Activated CD4-positive, alpha-beta memory T cell treated with anti-CD3 and anti-CD28 coated beads for 36 hours (primary cell): ENCODE measurements at regions of chr22 and their contacts with region 1.

Region 1: GRCh38 chr22:40533712-40534378 is 102.7 kb downstream of the MRTFA start:
- DNase-seq: peak; percentile 65
- H3K4me3 Mint-ChIP-seq: peak overlapping the region; percentile 78
- H3K27ac Mint-ChIP-seq: peak overlapping the region; percentile 83
- H3K4me1 Mint-ChIP-seq: peaks cover 64% of the 10 kb centered on the region
- H3K27me3 Mint-ChIP-seq: no peaks in the 10 kb centered on the region

Region 2: GRCh38 chr22:40270748-40271373 is 263.0 kb before region 1 on chr22:
- CTCF ChIA-PET with region 1: no interaction called
- POLR2A ChIA-PET with region 1: no interaction called
- intact Hi-C with region 1: no loop called
- DNase-seq: no peak
- H3K4me3 Mint-ChIP-seq: no peak overlapping the region
- H3K27ac Mint-ChIP-seq: no peak overlapping the region
- H3K4me1 Mint-ChIP-seq: peaks cover 24% of the 10 kb centered on the region
- H3K27me3 Mint-ChIP-seq: no peaks in the 10 kb centered on the region

Region 3: DNA sequence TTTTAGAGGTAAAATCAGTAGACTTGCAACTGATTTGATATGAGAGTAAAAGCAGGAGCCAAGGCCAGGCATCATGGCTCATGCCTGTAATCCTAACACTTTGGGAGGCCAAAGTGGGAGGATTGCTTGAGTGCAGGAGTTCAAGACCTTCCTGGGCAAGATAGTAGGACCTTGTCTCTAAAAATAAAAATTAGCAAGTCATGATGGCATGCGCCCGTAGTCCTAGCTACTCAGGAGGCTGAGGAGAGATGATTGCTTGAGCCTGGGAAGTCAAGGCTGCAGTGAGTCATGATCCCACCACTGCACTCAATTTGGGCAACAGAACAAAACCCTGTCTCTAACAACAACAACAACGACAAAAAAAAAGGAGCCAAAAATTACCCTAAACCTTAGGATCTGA is 149.9 kb before region 1 on chr22:
- CTCF ChIA-PET with region 1: no interaction called
- POLR2A ChIA-PET with region 1: no interaction called
- intact Hi-C with region 1: no loop called
- DNase-seq: no peak
- H3K4me3 Mint-ChIP-seq: no peak overlapping the region
- H3K27ac Mint-ChIP-seq: no peak overlapping the region
- H3K4me1 Mint-ChIP-seq: peaks cover 52% of the 10 kb centered on the region
- H3K27me3 Mint-ChIP-seq: no peaks in the 10 kb centered on the region

Region 4: GRCh38 chr22:40426594-40427333 is 107.1 kb before region 1 on chr22:
- CTCF ChIA-PET with region 1: no interaction called
- POLR2A ChIA-PET with region 1: no interaction called
- intact Hi-C with region 1: no loop called
- DNase-seq: no peak
- H3K4me3 Mint-ChIP-seq: no peak overlapping the region
- H3K27ac Mint-ChIP-seq: no peak overlapping the region
- H3K4me1 Mint-ChIP-seq: peaks cover 4% of the 10 kb centered on the region
- H3K27me3 Mint-ChIP-seq: no peaks in the 10 kb centered on the region

Region 5: GRCh38 chr22:40519284-40519947 is 14.4 kb before region 1 on chr22:
- CTCF ChIA-PET with region 1: interaction called, 40 read pairs
- POLR2A ChIA-PET with region 1: interaction called, 4 read pairs
- intact Hi-C with region 1: loop called (anchors 2 kb)
- DNase-seq: no peak
- H3K4me3 Mint-ChIP-seq: peak overlapping the region; percentile 60
- H3K27ac Mint-ChIP-seq: peak overlapping the region; percentile 91
- H3K4me1 Mint-ChIP-seq: peaks cover 32% of the 10 kb centered on the region
- H3K27me3 Mint-ChIP-seq: no peaks in the 10 kb centered on the region

Region 6: GRCh38 chr22:40583053-40583741 is 49.4 kb after region 1 on chr22:
- CTCF ChIA-PET with region 1: no interaction called
- POLR2A ChIA-PET with region 1: no interaction called
- intact Hi-C with region 1: loop called (anchors 2 kb)
- DNase-seq: peak; percentile 25
- H3K4me3 Mint-ChIP-seq: no peak overlapping the region
- H3K27ac Mint-ChIP-seq: peak overlapping the region; percentile 36
- H3K4me1 Mint-ChIP-seq: peaks cover 31% of the 10 kb centered on the region
- H3K27me3 Mint-ChIP-seq: no peaks in the 10 kb centered on the region

Region 7: GRCh38 chr22:40597526-40598430 is 63.9 kb after region 1 on chr22:
- CTCF ChIA-PET with region 1: no interaction called
- POLR2A ChIA-PET with region 1: no interaction called
- intact Hi-C with region 1: no loop called
- DNase-seq: no peak
- H3K4me3 Mint-ChIP-seq: no peak overlapping the region
- H3K27ac Mint-ChIP-seq: no peak overlapping the region
- H3K4me1 Mint-ChIP-seq: peaks cover 42% of the 10 kb centered on the region
- H3K27me3 Mint-ChIP-seq: no peaks in the 10 kb centered on the region

Region 8: DNA sequence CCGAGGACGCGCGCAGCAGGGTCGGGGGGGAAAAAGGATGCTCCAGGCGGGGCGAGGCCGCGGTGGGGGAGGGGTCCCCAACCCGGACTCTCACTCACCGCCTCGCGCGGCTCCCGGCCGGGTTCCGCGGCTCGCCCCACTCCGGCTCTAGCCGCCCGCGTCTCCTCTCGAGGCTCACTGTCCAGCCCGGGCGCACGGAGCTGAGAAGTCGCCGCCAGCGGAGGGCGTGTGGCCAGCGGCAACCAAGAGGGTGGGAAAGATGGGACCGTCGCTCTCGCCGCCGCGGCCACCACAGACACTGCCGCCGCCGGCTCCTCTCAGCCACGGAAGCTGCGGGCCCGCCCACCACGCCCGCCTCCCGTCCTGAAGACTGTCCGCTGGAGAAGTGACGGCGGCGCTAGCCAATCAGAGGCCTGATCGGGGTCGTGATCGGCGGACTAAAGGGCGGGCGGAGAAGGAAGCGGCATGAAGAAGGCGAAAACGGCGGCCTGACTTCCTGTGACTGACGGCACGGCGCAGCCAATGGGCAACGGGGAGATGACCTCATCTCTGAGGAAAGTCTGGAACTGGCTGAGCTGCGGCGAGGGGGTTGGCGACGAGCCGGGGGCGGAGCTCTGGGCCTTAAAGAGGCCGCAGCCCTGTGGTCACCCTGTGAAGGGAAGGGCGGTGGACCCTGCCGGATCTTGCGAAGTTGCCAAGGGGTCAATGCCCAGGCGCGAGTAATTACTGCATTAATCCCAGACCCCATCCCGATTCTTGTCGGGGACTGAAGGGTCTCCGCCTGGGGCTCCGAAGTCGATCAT is 102.7 kb after region 1 on chr22 and contains the start of gene MRTFA:
- CTCF ChIA-PET with region 1: interaction called, 218 read pairs
- POLR2A ChIA-PET with region 1: interaction called, 5 read pairs
- intact Hi-C with region 1: loop called (anchors 2 kb)
- DNase-seq: peak; percentile 100
- H3K4me3 Mint-ChIP-seq: peak within 1 kb of the TSS; percentile 91
- H3K27ac Mint-ChIP-seq: peak within 1 kb of the TSS; percentile 89
- H3K4me1 Mint-ChIP-seq: peaks cover 40% of the 10 kb centered on the region
- H3K27me3 Mint-ChIP-seq: no peaks in the 10 kb centered on the region
- total RNA-seq, gene MRTFA: 44.1 to 45.5 TPM

Region 9: DNA sequence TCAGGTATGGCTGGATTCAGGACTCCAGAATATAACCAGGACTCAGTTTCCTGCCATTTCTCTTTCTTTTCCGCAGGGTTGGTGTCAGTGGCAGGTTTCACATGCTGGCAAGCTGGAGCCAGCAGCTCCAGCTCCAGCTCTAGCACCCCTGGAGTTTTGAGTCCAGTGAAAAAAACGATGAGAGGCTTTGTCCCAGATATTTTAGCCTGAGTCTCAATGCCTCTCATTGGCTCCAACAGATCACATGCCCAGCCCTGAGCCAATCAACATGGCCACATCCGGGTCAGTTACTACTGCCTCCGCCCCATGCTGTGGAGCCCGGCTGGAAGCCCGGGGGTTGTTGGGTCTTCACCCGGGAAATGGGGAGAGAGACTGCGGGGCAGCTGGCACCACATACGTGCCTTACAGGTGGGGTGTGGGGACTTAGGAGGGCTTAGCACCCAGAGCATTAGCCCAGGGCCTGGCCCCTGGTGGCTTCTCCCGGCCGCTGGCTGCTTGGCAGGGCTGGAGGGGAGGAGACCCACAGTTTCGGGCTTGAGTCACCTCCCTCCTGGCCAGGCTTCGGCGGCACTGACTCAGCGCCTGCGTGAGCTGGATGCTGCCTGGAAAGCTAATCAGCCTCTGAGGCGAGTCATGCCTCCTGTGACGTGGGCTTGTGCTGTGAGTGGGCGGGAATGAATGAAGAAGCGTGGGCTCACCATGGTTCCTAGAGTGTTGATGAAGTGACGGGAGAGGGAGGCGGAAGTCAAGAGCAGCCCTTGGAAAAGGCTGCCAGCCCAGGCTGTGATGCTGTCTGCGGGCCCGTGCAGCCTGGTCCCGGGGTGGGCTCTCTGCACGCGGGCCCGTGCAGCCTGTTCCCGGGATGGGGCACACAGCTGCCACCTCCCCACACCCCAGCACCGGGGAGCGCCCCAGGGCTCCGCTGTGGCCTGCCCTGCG is 118.0 kb after region 1 on chr22:
- CTCF ChIA-PET with region 1: interaction called, 218 read pairs
- POLR2A ChIA-PET with region 1: interaction called, 4 read pairs
- intact Hi-C with region 1: loop called (anchors 2 kb)
- DNase-seq: peak; percentile 97
- H3K4me3 Mint-ChIP-seq: peak overlapping the region; percentile 70
- H3K27ac Mint-ChIP-seq: peak overlapping the region; percentile 91
- H3K4me1 Mint-ChIP-seq: peaks cover 24% of the 10 kb centered on the region
- H3K27me3 Mint-ChIP-seq: no peaks in the 10 kb centered on the region